Cardiac septum (tissue), 1 donor: ENCODE measurements at regions of chr19 and their contacts with region 1.

Region 1: DNA sequence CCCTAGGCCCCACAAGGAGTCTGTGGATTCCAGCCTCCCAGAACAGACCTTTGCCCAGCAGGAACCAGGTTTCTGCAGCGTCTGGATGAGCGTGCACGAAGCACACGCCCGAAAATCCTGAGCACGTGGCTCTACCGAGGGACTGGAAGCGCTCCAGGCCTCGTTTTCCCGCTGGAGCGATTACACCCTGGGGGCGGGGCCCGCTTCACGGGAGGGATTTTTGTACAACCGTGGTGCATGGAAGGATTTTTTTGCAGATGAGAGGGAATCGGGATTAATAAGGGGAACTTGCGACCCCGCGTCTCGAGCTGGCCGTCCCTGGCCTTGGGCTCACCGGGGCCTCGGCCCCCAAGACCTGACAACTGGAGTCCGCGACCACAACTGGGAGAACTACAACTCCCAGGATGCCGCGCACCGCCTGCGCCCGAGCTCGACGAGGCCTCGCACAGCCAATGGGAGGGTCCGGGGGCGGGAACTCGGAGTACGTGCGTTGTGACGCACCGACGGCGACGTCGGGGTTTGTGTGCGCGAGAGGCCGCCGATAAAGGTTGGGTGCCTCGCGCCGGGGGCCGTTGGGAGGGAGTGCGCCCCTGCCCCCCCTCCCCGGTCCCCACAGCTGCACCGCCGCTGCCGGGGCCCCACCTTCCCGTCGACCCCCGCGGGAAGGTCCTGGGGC is at the start of gene ZNF628:
- DNase-seq: peak; percentile 99
- total RNA-seq, gene ZNF628: 3.4 TPM

Region 2: DNA sequence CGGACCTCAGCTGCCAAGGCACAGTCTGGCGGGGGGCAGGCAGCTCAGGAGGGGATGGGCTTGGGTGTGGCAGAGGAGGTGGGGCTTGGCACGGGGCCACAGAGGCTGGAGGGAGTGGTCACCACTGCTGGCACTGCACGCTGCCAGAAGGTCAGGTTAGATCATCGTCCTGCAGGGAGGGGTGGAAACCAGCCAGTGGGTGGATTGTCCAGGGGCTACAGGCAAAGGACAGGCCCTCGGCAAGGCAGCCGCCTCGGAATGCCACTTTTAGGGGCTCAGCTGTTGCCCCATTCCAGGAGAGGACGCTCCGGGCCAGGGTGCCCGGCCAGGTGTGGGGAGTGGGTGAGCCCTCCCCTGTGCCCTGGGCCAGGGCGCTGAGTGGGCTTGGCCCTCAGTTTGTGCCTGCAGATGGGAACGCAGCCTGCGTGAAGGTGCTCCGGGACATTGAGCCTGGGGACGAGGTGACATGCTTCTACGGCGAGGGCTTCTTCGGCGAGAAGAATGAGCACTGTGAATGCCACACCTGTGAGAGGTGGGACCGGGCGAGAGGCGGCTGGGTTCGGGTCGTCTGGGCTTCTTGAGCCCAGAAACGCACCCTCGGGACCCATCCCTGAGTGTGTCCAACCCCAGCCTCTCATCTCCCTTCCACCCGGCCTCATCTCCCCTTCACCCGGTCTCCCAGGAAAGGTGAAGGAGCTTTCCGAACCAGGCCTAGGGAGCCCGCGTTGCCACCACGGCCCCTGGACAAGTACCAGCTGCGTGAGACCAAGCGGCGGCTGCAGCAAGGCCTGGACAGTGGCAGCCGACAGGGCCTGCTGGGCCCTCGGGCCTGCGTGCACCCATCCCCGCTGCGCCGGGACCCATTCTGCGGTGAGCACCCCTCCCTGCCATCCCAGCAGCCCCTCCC is 130.2 kb before region 1 on chr19:
- intact Hi-C with region 1: no loop called
- DNase-seq: no peak

Region 3: GRCh38 chr19:55461259-55461973 is 14.8 kb before region 1 on chr19 and contains the start of gene ISOC2:
- intact Hi-C with region 1: no loop called
- DNase-seq: peak; percentile 100
- total RNA-seq, gene ISOC2: 50.8 TPM

Region 4: GRCh38 chr19:55494172-55494761 is 18.0 kb after region 1 on chr19:
- intact Hi-C with region 1: no loop called
- DNase-seq: no peak

Region 5: GRCh38 chr19:55599468-55600279 is 123.4 kb after region 1 on chr19 and contains the start of gene FIZ1:
- intact Hi-C with region 1: loop called (anchors 2 kb)
- DNase-seq: peak; percentile 99
- total RNA-seq, gene FIZ1: 19.4 TPM